Activated B cell treated with CpG ODN at 0.5 μM for 24 hours (primary cell): ENCODE measurements at regions of chr3 and their contacts with region 1.

Region 1: DNA sequence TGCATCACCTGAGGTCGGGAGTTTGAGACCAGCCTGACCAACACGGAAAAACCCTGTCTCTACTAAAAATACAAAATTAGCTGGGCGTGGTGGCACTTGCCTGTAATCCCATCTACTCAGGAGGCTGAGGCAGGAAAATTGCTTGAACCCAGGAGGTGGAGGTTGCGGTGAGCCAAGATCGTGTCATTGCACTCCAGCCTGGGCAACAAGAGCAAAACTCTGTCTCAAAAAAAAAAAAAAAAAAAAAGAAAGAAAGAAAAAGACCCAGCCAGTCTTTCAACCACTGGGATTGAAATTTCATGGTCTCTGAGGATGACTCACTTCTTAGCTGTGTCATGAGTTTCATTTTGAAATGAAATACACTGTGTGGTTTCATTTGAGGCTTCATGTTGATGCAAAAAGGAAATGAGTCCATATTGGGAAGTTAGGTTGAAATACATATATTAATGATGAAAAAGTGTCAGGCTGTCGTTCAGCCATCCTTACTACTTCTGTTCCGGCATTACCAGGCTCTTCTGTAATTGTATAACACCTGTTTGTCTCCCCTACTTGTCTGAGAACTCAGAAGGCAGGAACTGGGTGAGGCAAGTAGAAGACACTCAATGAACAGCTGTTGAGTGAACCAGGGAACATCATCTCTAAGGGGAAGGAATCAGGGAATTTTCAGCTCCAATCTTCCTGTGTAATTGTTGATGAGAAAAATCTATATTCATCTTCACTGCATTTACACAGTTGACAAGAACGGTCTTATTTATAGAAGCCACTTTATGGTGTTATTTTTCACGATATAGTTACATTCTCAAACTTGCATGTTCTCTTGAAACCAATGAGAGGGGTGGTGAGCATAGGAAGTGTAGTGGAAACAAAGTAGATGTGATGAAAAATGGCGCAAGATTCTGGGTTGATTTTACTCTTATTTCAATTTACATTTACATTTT is 87.4 kb downstream of the NFKBIZ start:
- DNase-seq: no peak
- ATAC-seq: peak; percentile 78
- H3K4me3 Mint-ChIP-seq: peak overlapping the region; percentile 76
- H3K27ac Mint-ChIP-seq: peak overlapping the region; percentile 94
- H3K4me1 Mint-ChIP-seq: peaks cover 49% of the 10 kb centered on the region
- H3K27me3 Mint-ChIP-seq: no peaks in the 10 kb centered on the region
- CTCF ChIP-seq: no peak

Region 2: DNA sequence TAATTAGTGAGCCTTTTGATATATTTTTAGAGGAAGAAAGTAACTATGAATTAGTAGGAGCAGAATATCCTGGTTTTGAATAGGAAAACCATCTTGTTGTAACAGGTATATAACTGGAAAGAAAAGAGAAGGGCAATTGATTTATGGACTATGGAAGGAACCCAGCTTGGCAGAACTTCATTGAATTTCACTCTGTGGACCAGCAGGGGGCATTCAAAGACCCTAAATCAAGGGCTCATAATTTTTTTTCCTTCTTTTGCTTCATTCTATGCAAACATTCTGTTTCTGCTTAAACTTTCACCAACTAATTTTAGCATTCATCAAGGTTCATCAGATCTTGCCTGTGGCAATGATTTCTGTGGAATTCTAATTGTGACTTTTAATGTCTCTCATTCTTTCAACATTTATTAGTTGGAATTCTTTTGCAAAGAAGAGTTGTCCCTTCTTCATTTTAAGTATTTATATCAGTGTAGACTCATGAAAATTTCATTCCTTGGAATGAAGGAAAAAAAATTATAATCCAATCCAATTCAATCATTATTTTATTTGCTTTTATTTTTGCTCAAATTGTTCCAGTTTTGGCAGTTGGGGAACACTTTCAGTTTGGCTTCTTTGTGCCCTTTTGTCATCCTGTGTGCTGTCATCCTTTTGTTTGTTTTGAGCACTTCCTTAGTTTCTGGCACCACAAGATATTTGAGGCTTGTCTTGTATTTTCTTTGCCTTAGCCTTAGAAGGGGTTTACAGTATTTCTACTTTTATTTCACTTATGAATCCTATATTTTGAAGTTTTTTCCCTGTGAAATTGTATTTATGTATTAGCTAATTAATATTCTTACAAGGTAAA is 127.3 kb before region 1 on chr3:
- CTCF ChIA-PET with region 1: interaction called, 9 read pairs
- POLR2A ChIA-PET with region 1: interaction called, 19 read pairs
- intact Hi-C with region 1: loop called (anchors 5 kb)
- DNase-seq: no peak
- ATAC-seq: peak; percentile 82
- H3K4me3 Mint-ChIP-seq: no peak overlapping the region
- H3K27ac Mint-ChIP-seq: no peak overlapping the region
- H3K4me1 Mint-ChIP-seq: peaks cover 37% of the 10 kb centered on the region
- H3K27me3 Mint-ChIP-seq: no peaks in the 10 kb centered on the region
- CTCF ChIP-seq: peak; percentile 59

Region 3: DNA sequence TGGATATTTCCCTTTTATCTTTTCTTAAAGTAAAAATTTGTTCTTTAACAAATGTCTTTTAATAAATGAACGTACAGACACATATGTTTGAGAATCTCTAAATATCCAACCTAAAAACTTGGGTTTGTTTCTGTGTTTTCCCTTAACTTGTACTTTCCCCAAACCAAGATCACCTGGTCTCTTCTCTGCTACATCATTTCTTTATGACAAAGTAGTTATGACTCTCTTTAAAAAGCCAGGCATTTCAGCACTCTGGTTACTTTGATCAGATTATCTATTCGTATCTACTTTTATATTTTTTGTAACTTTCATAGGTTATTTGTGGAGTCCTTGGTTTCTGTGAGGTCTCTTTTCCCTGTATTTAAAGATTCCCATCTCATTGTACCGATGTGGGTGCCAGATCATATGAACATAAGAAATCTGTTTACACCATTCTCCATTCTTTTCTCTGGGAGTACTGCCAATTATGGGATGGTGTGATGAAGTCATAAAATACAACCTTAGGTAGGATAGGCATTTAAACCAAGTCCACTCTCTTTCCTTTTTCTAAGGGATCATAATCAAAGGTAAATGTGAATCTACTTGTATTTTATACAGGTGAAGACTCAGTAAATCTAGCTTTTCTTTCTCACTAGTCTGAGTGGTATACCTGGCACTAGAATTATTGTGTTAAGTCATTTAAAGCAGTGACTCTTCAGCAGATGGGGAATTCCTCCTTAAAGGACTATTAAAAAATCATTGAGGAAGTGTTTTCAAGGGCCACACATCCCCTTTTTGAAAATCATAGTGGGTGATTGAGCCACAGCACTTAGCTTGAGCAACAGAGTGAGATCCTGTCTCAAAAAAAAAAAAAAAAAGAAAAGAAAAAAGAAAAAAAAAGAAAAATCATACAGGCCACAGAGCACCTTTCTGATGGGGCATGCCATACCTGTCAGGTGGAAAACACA is 99.8 kb before region 1 on chr3:
- CTCF ChIA-PET with region 1: no interaction called
- POLR2A ChIA-PET with region 1: interaction called, 10 read pairs
- intact Hi-C with region 1: no loop called
- DNase-seq: no peak
- ATAC-seq: peak; percentile 84
- H3K4me3 Mint-ChIP-seq: peak overlapping the region; percentile 79
- H3K27ac Mint-ChIP-seq: peak overlapping the region; percentile 85
- H3K4me1 Mint-ChIP-seq: peaks cover 91% of the 10 kb centered on the region
- H3K27me3 Mint-ChIP-seq: no peaks in the 10 kb centered on the region
- CTCF ChIP-seq: no peak

Region 4: GRCh38 chr3:101902041-101902440 is 34.6 kb before region 1 on chr3:
- CTCF ChIA-PET with region 1: interaction called, 5 read pairs
- POLR2A ChIA-PET with region 1: interaction called, 67 read pairs
- intact Hi-C with region 1: loop called (anchors 1 kb)
- DNase-seq: no peak
- ATAC-seq: peak; percentile 56
- H3K4me3 Mint-ChIP-seq: peak overlapping the region; percentile 36
- H3K27ac Mint-ChIP-seq: peak overlapping the region; percentile 91
- H3K4me1 Mint-ChIP-seq: peaks cover 61% of the 10 kb centered on the region
- H3K27me3 Mint-ChIP-seq: no peaks in the 10 kb centered on the region
- CTCF ChIP-seq: no peak

Region 5: DNA sequence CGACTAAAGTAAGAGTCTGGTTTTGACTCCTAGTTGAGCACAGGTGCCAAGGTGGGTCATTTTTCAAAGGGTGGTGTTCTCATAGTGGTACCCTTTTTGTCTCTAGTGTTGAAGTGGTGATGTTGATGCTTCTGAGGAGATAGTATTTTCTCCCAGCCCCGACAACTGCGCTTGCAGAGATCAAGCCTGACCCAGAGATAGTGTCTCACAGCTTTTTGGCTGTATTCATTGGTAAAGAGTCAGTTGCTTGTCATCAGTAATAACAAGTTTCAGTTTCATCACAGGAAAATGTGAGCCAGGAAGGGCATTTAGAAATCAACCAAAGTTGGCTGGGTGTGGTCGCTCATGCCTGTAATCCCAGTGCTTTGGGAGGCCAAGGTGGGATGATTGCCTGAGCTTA is 51.9 kb after region 1 on chr3:
- CTCF ChIA-PET with region 1: no interaction called
- POLR2A ChIA-PET with region 1: interaction called, 15 read pairs
- intact Hi-C with region 1: loop called (anchors 1 kb)
- DNase-seq: no peak
- ATAC-seq: peak; percentile 36
- H3K4me3 Mint-ChIP-seq: no peak overlapping the region
- H3K27ac Mint-ChIP-seq: peak overlapping the region; percentile 75
- H3K4me1 Mint-ChIP-seq: peaks cover 52% of the 10 kb centered on the region
- H3K27me3 Mint-ChIP-seq: no peaks in the 10 kb centered on the region
- CTCF ChIP-seq: no peak

Region 6: GRCh38 chr3:102038477-102039142 is 101.9 kb after region 1 on chr3:
- CTCF ChIA-PET with region 1: interaction called, 3 read pairs
- POLR2A ChIA-PET with region 1: interaction called, 13 read pairs
- intact Hi-C with region 1: loop called (anchors 1 kb)
- DNase-seq: no peak
- ATAC-seq: peak; percentile 82
- H3K4me3 Mint-ChIP-seq: peak overlapping the region; percentile 56
- H3K27ac Mint-ChIP-seq: peak overlapping the region; percentile 91
- H3K4me1 Mint-ChIP-seq: peaks cover 43% of the 10 kb centered on the region
- H3K27me3 Mint-ChIP-seq: no peaks in the 10 kb centered on the region
- CTCF ChIP-seq: no peak

Region 7: GRCh38 chr3:102224128-102224527 is 287.4 kb after region 1 on chr3:
- CTCF ChIA-PET with region 1: interaction called, 34 read pairs
- POLR2A ChIA-PET with region 1: interaction called, 19 read pairs
- intact Hi-C with region 1: loop called (anchors 1 kb)
- DNase-seq: no peak
- ATAC-seq: peak; percentile 72
- H3K4me3 Mint-ChIP-seq: no peak overlapping the region
- H3K27ac Mint-ChIP-seq: peak overlapping the region; percentile 36
- H3K4me1 Mint-ChIP-seq: peaks cover 44% of the 10 kb centered on the region
- H3K27me3 Mint-ChIP-seq: no peaks in the 10 kb centered on the region
- CTCF ChIP-seq: no peak